CD4-positive, alpha-beta memory T cell (primary cell): ENCODE measurements at regions of chr7 and their contacts with region 1.

Region 1: GRCh38 chr7:87152107-87152844 is at the start of gene DMTF1:
- DNase-seq: peak; percentile 83 to 89 (median 85)
- H3K4me3 ChIP-seq: peak within 1 kb of the TSS; percentile 82 to 99
- H3K4me3 Mint-ChIP-seq: peak within 1 kb of the TSS; percentile 94 to 99 (median 96)
- H3K27ac ChIP-seq: peak within 1 kb of the TSS; percentile 82
- H3K27ac Mint-ChIP-seq: peak within 1 kb of the TSS; percentile 95 to 100 (median 97)
- H3K4me1 ChIP-seq: peaks cover 47% of the 10 kb centered on the region
- H3K4me1 Mint-ChIP-seq: peaks cover 31 to 51% (median 43%) of the 10 kb centered on the region in 4 donors
- H3K27me3 ChIP-seq: no peaks in the 10 kb centered on the region
- H3K27me3 Mint-ChIP-seq: no peaks in the 10 kb centered on the region
- total RNA-seq, gene DMTF1: 173 to 183 TPM

Region 2: DNA sequence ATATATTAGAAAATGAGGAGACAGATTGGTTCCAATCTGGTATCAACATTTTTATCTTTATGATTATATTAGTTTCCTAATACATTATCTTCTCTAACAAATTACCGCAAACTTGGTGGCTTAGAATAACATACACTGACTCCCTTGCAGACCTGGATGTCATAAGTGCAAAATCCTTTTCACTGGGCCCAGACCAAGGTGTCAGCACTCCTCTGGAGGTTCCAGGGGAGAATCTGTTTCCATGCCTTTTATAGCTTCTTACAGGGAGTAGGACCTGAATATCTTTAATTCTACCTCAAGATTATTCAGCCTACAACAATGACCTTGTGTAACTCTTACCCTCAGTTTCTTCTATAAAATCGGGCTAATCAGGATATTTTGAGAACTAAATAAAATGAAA is 838.4 kb before region 1 on chr7:
- CTCF ChIA-PET with region 1: no interaction called
- POLR2A ChIA-PET with region 1: no interaction called
- intact Hi-C with region 1: no loop called
- DNase-seq: no peak
- H3K4me3 ChIP-seq: no peak overlapping the region
- H3K4me3 Mint-ChIP-seq: no peak overlapping the region
- H3K27ac ChIP-seq: no peak overlapping the region
- H3K27ac Mint-ChIP-seq: no peak overlapping the region
- H3K4me1 ChIP-seq: no peaks in the 10 kb centered on the region
- H3K4me1 Mint-ChIP-seq: no peaks in the 10 kb centered on the region
- H3K27me3 ChIP-seq: no peaks in the 10 kb centered on the region
- H3K27me3 Mint-ChIP-seq: no peaks in the 10 kb centered on the region

Region 3: GRCh38 chr7:86926732-86927131 is 225.5 kb before region 1 on chr7:
- CTCF ChIA-PET with region 1: interaction called, 101 read pairs
- POLR2A ChIA-PET with region 1: interaction called, 3 read pairs
- intact Hi-C with region 1: loop called (anchors 1 kb)
- DNase-seq: peak in 4 of 5 donors; percentile 39 to 60 (median 53)
- H3K4me3 ChIP-seq: no peak overlapping the region
- H3K4me3 Mint-ChIP-seq: no peak overlapping the region
- H3K27ac ChIP-seq: no peak overlapping the region
- H3K27ac Mint-ChIP-seq: peak overlapping the region in 1 of 7 donors; percentile 63
- H3K4me1 ChIP-seq: no peaks in the 10 kb centered on the region
- H3K4me1 Mint-ChIP-seq: no peaks in the 10 kb centered on the region
- H3K27me3 ChIP-seq: no peaks in the 10 kb centered on the region
- H3K27me3 Mint-ChIP-seq: peaks cover 0 to 3% of the 10 kb centered on the region in 2 donors

Region 4: DNA sequence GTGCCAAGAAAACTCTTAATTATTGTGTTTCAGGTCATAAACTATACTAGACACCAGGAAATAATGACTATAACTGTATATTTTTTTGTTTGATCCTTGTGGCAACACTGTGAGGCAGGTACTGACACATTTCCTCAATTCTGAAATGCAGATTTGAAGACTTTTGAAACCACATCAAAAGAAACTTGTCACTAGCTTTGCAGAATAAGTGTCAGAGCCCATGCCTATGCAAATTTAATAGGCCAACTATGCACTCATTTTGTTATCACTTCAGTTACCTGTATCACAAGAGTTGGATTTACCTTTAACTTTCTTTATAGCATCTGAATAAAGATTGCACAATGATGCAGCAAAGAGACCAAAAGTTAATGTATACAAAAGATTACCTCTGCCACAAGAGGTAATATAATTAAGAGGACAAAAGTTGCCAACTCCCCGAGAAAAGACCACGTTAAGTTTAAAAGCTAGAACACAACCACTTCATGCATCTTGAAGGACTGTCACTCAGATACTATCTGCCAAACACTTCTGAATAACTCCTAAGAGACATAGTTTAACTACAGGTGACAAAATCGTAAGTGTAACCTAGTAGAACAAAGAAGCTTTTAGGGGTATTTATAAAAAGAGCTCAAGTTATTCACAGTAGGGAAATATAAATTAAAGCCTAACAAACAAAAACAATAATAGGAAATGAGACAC is 173.3 kb before region 1 on chr7:
- CTCF ChIA-PET with region 1: interaction called, 5 read pairs
- POLR2A ChIA-PET with region 1: interaction called, 13 read pairs
- intact Hi-C with region 1: loop called (anchors 1 kb)
- DNase-seq: peak; percentile 74 to 89 (median 84)
- H3K4me3 ChIP-seq: no peak overlapping the region
- H3K4me3 Mint-ChIP-seq: peak overlapping the region in 6 of 8 donors; percentile 30 to 74 (median 44)
- H3K27ac ChIP-seq: peak overlapping the region; percentile 65
- H3K27ac Mint-ChIP-seq: peak overlapping the region; percentile 87 to 98 (median 95)
- H3K4me1 ChIP-seq: peaks cover 34% of the 10 kb centered on the region
- H3K4me1 Mint-ChIP-seq: peaks cover 28 to 55% (median 44%) of the 10 kb centered on the region in 4 donors
- H3K27me3 ChIP-seq: no peaks in the 10 kb centered on the region
- H3K27me3 Mint-ChIP-seq: no peaks in the 10 kb centered on the region

Region 5: GRCh38 chr7:87173471-87173870 is 21.2 kb after region 1 on chr7:
- CTCF ChIA-PET with region 1: interaction called, 9 read pairs
- POLR2A ChIA-PET with region 1: interaction called, 7 read pairs
- intact Hi-C with region 1: loop called (anchors 2 kb)
- DNase-seq: no peak
- H3K4me3 ChIP-seq: no peak overlapping the region
- H3K4me3 Mint-ChIP-seq: no peak overlapping the region
- H3K27ac ChIP-seq: no peak overlapping the region
- H3K27ac Mint-ChIP-seq: peak overlapping the region in 5 of 7 donors; percentile 30 to 86 (median 49)
- H3K4me1 ChIP-seq: no peaks in the 10 kb centered on the region
- H3K4me1 Mint-ChIP-seq: peaks cover 20 to 34% (median 29%) of the 10 kb centered on the region in 4 donors
- H3K27me3 ChIP-seq: no peaks in the 10 kb centered on the region
- H3K27me3 Mint-ChIP-seq: no peaks in the 10 kb centered on the region

Region 6: GRCh38 chr7:87213811-87214210 is 61.5 kb after region 1 on chr7:
- CTCF ChIA-PET with region 1: interaction called, 10 read pairs
- POLR2A ChIA-PET with region 1: interaction called, 189 read pairs
- intact Hi-C with region 1: loop called (anchors 1 kb)
- DNase-seq: no peak
- H3K4me3 ChIP-seq: no peak overlapping the region
- H3K4me3 Mint-ChIP-seq: peak overlapping the region; percentile 38 to 94 (median 80)
- H3K27ac ChIP-seq: peak overlapping the region; percentile 34
- H3K27ac Mint-ChIP-seq: peak overlapping the region; percentile 29 to 94 (median 75)
- H3K4me1 ChIP-seq: peaks cover 93% of the 10 kb centered on the region
- H3K4me1 Mint-ChIP-seq: peaks cover 65 to 97% (median 80%) of the 10 kb centered on the region in 4 donors
- H3K27me3 ChIP-seq: no peaks in the 10 kb centered on the region
- H3K27me3 Mint-ChIP-seq: no peaks in the 10 kb centered on the region

Region 7: GRCh38 chr7:87391020-87391701 is 238.9 kb after region 1 on chr7:
- CTCF ChIA-PET with region 1: no interaction called
- POLR2A ChIA-PET with region 1: no interaction called
- intact Hi-C with region 1: no loop called
- DNase-seq: no peak
- H3K4me3 ChIP-seq: no peak overlapping the region
- H3K4me3 Mint-ChIP-seq: no peak overlapping the region
- H3K27ac ChIP-seq: no peak overlapping the region
- H3K27ac Mint-ChIP-seq: no peak overlapping the region
- H3K4me1 ChIP-seq: no peaks in the 10 kb centered on the region
- H3K4me1 Mint-ChIP-seq: peaks cover 0 to 11% (median 3%) of the 10 kb centered on the region in 4 donors
- H3K27me3 ChIP-seq: no peaks in the 10 kb centered on the region
- H3K27me3 Mint-ChIP-seq: no peaks in the 10 kb centered on the region

Region 8: DNA sequence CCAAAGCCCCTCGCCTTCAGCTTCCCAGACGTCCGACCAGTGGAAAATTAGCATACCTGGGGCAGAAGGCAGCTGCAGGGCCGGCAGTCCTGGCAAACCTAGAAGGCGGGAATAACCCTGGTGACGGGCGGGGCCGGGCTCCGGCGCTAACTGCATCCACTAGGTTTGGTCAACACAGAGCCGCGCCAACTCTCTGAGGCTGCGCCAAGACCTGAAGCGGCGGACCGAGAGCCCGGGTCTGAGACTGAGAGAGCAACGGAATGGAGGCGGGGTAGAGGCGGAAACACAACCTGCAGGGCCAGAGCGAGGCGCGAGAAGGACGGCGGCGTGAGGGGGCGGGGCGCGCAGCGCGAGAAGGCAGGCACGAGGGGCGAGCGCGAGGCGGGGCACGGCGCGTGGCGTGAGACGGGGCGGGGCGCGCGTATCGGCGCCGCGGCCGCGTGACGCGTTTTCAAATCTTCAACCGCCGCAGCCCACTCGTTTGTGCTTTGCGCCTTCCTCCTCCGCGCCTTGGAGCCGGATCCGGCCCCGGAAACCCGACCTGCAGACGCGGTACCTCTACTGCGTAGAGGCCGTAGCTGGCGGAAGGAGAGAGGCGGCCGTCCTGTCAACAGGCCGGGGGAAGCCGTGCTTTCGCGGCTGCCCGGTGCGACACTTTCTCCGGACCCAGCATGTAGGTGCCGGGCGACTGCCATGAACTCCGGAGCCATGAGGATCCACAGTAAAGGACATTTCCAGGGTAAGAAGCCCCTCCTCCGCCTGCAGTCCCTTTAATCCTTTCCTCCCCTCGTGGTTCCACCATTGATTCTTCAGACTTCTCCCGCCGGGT is 724.0 kb after region 1 on chr7 and contains the starts of genes DBF4 and SLC25A40:
- CTCF ChIA-PET with region 1: interaction called, 4 read pairs
- POLR2A ChIA-PET with region 1: interaction called, 4 read pairs
- intact Hi-C with region 1: loop called (anchors 1 kb)
- DNase-seq: peak; percentile 91 to 96 (median 95)
- H3K4me3 ChIP-seq: peak within 1 kb of the TSS; percentile 79 to 80
- H3K4me3 Mint-ChIP-seq: peak within 1 kb of the TSS; percentile 93 to 97 (median 95)
- H3K27ac ChIP-seq: peak within 1 kb of the TSS; percentile 91
- H3K27ac Mint-ChIP-seq: peak within 1 kb of the TSS; percentile 71 to 99 (median 97)
- H3K4me1 ChIP-seq: peaks cover 43% of the 10 kb centered on the region
- H3K4me1 Mint-ChIP-seq: peaks cover 37 to 58% (median 46%) of the 10 kb centered on the region in 4 donors
- H3K27me3 ChIP-seq: no peaks in the 10 kb centered on the region
- H3K27me3 Mint-ChIP-seq: no peaks in the 10 kb centered on the region
- total RNA-seq, gene DBF4: 25.3 to 29.0 TPM
- total RNA-seq, gene SLC25A40: 28.9 to 29.8 TPM